Heart right ventricle (tissue), 16 donors: ENCODE measurements at regions of chr1 and their contacts with region 1.

Region 1: DNA sequence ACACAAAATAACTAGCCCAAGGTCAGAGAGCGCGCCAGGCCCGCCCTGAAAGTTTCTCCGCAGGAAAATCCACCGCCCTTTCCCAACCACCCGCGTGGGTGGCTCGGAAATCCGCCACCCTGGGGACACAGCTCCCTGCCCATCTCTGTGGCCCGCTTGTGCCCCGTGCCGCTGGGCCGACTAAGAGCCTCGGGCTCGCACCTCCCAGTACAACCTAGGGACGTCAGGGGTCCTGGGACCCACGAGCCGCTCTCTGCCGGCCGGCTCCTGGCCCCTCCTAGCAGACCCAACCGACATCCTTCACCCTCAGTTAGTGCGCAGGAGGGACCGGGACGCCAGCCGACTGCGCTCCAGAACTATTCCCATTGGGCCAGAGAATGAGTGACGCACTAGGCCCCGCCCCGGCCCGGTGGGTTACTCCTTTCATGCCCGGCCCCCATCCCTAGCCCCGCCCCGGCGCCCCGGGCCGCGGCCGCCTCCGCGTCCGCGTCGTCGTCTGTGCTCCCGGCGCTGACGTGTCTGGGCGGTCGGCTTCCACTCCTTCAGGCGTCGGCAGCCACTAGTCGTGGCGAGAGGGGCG is 395 bp upstream of the UAP1 start:
- DNase-seq: peak; percentile 99
- ATAC-seq: peak; percentile 96 to 99 (median 98)
- H3K4me3 ChIP-seq: peak overlapping the region; percentile 74 to 98 (median 92)
- H3K27ac ChIP-seq: peak overlapping the region; percentile 89 to 100 (median 98)
- H3K4me1 ChIP-seq: peaks cover 0 to 47% (median 21%) of the 10 kb centered on the region in 9 donors
- H3K27me3 ChIP-seq: no peaks in the 10 kb centered on the region
- CTCF ChIP-seq: peak in 1 of 9 donors; percentile 5

Region 2: GRCh38 chr1:162497723-162498500 is 63.2 kb before region 1 on chr1 and contains the start of gene UHMK1:
- intact Hi-C with region 1: loop called in 5 of 10 experiments (anchors 1 to 10 kb)
- DNase-seq: peak; percentile 87 to 91
- ATAC-seq: peak; percentile 99 to 100 (median 99)
- H3K4me3 ChIP-seq: peak within 1 kb of the TSS; percentile 67 to 99 (median 94)
- H3K27ac ChIP-seq: peak within 1 kb of the TSS; percentile 75 to 99 (median 95)
- H3K4me1 ChIP-seq: peaks cover 0 to 37% (median 17%) of the 10 kb centered on the region in 9 donors
- H3K27me3 ChIP-seq: no peaks in the 10 kb centered on the region
- CTCF ChIP-seq: no peak
- total RNA-seq, gene UHMK1: 16.9 to 30.6 (median 21.0) TPM